Thyroid gland (tissue), 4 donors: ENCODE measurements at regions of chr14 and their contacts with region 1.

Region 1: DNA sequence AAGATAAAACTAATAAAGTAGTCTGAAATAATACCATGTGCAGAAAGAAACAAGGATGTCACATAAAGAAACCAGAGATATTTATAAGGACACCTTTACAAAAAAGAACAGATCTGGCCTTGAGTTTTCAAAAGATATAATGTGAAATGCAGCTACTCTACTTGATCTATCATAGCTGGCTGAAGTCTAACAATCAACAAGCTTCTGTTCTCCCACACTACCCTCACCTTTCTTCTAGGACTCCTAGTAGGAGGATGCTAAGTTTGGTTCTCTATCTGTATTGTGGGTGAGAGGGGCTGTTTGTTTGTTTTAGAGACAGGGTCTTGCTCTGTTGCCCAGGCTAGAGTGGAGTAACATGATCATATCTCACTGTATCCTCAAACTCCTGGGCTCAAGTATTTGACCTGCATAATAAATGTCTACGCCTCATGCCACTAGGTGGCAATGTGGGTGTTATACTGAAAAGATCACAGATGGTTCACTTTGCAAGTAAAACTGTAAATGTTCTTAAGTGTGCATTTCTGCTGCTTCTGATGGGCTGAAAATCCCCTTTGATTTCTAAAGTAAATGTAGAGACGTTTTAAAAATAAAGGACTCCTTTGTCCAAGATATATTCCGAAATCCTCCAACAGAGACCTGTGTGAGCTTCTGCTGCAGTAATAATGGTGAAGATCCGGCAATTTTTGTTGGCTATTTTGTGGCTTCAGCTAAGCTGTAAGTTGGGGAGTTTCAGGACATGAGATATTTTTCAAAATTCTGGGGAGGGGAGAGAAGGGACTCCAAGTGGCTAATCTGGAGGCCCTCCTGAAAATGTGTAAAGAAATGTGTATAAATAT is 269.3 kb downstream of the DAD1 start:
- DNase-seq: peak; percentile 74 to 78
- H3K4me3 ChIP-seq: no peak overlapping the region
- H3K27ac ChIP-seq: no peak overlapping the region
- H3K4me1 ChIP-seq: no peaks in the 10 kb centered on the region
- H3K27me3 ChIP-seq: no peaks in the 10 kb centered on the region
- CTCF ChIP-seq: peak; percentile 24 to 79 (median 68)
- POLR2A ChIP-seq: no peak

Region 2: DNA sequence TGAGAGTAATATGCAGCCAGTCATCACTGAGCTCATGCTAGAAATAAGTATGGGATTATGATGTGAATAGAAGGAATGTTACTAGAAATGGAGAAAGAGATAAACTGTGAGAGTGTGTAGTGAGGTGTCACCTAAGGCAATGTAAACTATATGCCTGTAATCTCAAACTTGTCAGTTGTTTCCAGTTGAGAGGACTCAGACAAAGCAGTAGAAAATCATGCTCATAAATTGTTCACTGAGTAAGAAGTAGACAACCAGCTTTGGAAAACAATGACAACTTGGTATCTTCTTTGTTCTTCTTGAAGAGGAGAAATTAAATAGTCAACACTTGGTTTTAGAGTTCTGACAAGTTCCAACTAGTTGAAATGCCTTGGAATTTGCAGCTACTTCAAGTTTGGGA is 497.6 kb before region 1 on chr14:
- intact Hi-C with region 1: no loop called
- DNase-seq: no peak
- H3K4me3 ChIP-seq: no peak overlapping the region
- H3K27ac ChIP-seq: no peak overlapping the region
- H3K4me1 ChIP-seq: no peaks in the 10 kb centered on the region
- H3K27me3 ChIP-seq: no peaks in the 10 kb centered on the region
- CTCF ChIP-seq: no peak
- POLR2A ChIP-seq: no peak

Region 3: DNA sequence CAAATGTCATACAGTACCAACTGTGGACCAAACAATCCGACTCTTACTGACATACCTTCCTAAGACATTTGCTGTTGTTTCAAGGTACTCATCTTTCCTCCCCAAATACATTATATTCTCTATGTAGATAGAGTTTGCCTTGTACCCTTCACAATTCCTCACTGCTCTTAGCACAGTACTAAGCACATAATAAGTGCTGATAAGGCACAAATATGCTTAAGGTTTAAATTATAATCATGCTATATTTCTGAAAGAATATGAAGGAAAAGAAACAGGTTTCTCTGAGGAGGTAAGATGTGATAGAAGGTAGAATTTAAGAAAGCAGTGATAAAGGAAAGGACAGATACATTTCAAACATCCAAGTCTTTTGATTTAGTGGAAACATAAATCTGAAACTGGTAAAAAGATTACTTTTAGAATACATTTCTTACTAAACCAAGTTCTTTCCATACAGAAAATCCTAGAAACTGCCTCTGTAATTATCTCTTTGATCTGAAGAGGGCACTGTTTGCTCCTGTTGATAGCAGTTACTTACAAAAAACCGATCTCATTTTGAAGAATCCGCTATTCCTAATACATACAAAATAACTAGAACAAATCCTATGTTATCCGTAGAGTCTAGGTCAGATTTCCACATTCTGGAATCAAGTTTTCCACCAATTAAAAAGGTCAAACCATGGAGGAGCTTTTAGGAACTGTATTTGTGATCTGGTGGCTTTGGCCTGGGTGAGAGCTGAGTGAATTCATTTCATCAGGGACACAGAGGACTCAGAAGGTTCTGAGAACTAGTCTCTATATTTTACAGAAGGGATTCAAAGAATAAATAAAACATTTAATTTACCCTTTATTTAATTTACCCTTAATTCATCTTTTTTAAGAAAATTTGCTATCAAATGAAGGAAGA is 42.6 kb before region 1 on chr14:
- intact Hi-C with region 1: no loop called
- DNase-seq: no peak
- H3K4me3 ChIP-seq: no peak overlapping the region
- H3K27ac ChIP-seq: no peak overlapping the region
- H3K4me1 ChIP-seq: no peaks in the 10 kb centered on the region
- H3K27me3 ChIP-seq: no peaks in the 10 kb centered on the region
- CTCF ChIP-seq: peak in 3 of 6 experiments; percentile 9 to 57 (median 24)
- POLR2A ChIP-seq: no peak

Region 4: GRCh38 chr14:22383515-22384166 is 63.9 kb after region 1 on chr14:
- intact Hi-C with region 1: loop called (anchors 5 kb)
- DNase-seq: no peak
- H3K4me3 ChIP-seq: no peak overlapping the region
- H3K27ac ChIP-seq: no peak overlapping the region
- H3K4me1 ChIP-seq: no peaks in the 10 kb centered on the region
- H3K27me3 ChIP-seq: no peaks in the 10 kb centered on the region
- CTCF ChIP-seq: no peak
- POLR2A ChIP-seq: no peak

Region 5: DNA sequence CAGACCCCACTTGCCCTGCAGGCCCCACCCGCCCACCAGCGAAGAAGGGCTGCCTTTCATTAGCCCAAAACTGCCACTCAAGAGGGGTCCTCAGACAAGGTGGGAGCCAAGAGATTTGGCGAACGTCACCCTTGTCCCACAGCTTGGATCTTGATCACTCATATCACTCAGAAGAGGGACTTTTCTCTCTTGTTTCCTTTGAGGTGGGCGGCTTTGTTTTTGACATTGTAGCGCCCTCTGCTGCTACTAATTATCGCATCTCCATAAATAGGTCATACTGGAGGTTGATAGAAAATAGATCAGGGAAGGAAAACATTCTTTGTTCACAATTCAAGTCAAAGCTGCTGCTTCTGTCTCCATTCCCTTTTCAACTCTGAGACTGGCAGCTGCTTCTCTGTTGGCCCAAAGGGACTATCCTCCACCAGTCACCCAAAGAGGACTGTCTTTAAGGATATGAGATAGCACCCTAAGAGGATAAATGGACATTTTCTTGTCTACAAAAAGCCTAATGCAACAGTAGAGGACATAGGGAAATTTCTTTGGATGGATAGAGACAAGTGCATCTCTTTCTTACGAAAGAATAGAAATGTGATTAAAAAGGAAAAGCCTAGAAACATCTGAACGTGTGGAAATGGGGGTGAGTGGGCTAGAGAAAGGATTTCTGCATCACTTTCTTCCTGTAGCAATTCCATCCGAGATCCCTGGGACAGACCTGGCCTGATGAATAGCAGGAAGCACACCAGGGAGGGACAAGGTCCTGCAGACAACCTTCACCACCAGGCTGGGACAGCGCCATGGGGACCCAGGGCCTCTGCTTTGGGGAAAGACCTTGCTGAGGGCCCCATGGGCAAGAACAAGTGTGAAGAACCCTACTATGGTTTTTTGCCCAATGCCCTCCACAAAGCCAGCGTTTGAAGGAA is 153.5 kb after region 1 on chr14:
- intact Hi-C with region 1: loop called (anchors 5 kb)
- DNase-seq: peak; percentile 53 to 59
- H3K4me3 ChIP-seq: no peak overlapping the region
- H3K27ac ChIP-seq: no peak overlapping the region
- H3K4me1 ChIP-seq: peaks cover 0 to 11% of the 10 kb centered on the region in 2 donors
- H3K27me3 ChIP-seq: no peaks in the 10 kb centered on the region
- CTCF ChIP-seq: peak in 5 of 6 experiments; percentile 39 to 78 (median 66)
- POLR2A ChIP-seq: no peak

Region 6: GRCh38 chr14:22668417-22668816 is 348.7 kb after region 1 on chr14:
- intact Hi-C with region 1: no loop called
- DNase-seq: no peak
- H3K4me3 ChIP-seq: no peak overlapping the region
- H3K27ac ChIP-seq: no peak overlapping the region
- H3K4me1 ChIP-seq: no peaks in the 10 kb centered on the region
- H3K27me3 ChIP-seq: no peaks in the 10 kb centered on the region
- CTCF ChIP-seq: no peak
- POLR2A ChIP-seq: no peak